ENCODE measurements at regions of chr2 and their contacts with region 1.

Region 1: DNA sequence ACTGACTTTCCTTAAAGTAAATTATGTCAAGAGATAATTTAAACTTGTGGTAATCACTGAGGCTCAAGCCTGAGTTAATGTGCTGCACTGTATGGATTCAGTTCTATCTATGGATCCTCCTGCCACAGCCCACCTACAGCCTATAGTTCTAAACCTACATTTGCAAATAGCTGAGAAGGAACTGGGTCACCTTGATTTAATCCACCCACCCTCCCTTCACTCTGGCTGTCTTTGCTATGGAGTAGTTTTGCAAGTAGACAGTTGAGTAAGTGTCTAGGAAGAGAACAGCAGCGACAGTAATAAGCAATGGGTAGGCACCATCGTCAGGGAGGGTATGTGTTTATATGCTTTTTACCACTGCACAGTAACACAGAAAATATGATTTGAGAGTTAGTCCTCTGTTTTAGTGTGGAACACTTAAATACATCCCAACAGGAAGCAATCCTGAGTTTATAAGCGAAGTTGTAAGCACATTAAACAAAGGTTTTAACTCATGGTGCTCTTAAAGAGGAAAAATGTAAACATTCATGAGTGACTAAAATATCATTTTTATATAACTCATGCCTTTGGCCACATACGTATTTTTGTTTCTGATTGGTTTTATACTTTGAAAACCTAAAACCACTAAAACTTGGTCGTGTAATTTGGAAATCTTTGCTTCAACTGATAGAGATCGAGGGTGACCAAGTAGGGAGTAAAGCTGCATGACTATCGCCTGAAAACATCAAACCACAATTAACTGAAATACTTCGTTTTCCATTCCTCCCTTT is 36.3 kb upstream of the CHRNA1 start:
- DNase-seq: no peak
- ATAC-seq: no peak

Region 2: DNA sequence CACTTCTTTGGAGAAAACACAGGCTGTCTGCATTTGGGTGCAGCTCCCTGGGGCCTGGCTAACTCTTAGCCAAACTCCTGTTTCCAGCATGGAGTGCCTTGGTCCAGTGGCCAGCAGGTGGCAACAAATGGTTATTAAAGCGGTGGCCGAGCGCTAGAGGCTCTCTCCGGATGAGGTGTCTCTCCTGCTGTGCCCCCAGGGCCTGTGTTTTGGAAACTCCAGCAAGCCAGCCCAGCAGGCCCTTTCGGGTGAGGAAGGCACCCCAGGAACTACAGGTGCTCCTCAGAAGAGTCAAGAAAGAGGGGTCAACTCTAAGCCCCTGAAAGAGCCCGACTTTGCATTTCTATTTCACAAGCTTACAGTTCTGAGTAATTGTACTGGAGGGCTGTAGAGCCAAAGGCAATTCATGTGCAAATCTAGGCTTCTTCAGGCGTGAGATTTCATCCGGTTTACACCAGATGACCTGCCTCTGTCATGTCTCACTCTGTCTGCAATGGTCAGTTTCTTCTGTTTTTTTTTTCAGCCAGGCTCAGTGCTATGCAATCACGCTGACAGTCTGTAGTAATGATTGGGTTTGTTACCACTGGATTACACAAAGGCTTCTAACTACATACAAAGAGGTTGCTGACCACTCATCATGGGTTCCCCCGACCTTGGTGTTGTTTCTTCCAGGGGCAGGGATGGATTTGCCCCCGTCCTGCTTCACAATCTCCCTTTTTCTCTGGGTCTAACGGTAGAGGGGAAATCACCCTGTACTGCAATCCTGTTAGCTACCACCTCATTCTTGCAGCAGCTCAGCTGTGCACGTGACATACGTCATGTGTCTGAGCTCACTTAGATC is 28.8 kb before region 1 on chr2:
- intact Hi-C with region 1: no loop called
- DNase-seq: peak; percentile 86
- ATAC-seq: peak; percentile 95

Region 3: DNA sequence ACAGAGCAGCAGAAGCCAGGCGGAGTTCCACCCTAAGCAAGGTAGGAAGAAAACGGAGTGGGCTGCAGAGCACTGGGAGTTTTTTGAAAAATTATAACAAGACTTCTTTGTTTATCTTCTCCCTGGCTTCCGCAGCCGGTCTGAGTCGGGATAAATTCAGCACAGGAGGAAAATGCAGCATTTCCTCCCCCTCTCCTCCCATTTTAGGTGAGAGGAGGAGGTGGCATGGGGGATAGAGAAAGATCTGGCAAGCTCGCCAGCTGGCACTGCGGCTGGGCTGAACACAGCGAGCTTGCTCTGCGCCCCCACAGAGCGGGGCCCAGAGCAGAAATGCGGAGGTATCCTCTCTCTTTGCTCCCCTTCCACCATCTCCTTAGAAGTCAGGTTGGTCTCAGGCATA is 18.6 kb before region 1 on chr2:
- intact Hi-C with region 1: loop called (anchors 2 kb)
- DNase-seq: no peak
- ATAC-seq: no peak

Measured in Right ventricle myocardium inferior (tissue), 1 donor.